K562 (cell line): ENCODE measurements at regions of chr16 and their contacts with region 1.

Region 1: GRCh38 chr16:55494994-55495421 is 13.9 kb upstream of the LPCAT2 start:
- DNase-seq: peak in 2 of 4 experiments; percentile 39 to 47
- ATAC-seq: peak; percentile 84
- H3K4me3 ChIP-seq: no peak overlapping the region
- H3K27ac ChIP-seq: no peak overlapping the region
- H3K4me1 ChIP-seq: peaks cover 0 to 6% of the 10 kb centered on the region in 2 experiments; a peak in 1 of 5 replicates
- H3K27me3 ChIP-seq: peaks cover 0 to 19% of the 10 kb centered on the region in 2 experiments; a peak in 4 of 5 replicates
- CTCF ChIP-seq: peak; percentile 48 to 72 (median 51)
- EP300 ChIP-seq: no peak
- POLR2A ChIP-seq: no peak
- RAD21 ChIP-seq: peak; percentile 88 to 91

Region 2: GRCh38 chr16:55543472-55543871 is 48.5 kb after region 1 on chr16:
- CTCF ChIA-PET with region 1: interaction called, 15 read pairs
- POLR2A ChIA-PET with region 1: no interaction called
- in situ Hi-C with region 1: no loop called
- intact Hi-C with region 1: no loop called
- DNase-seq: peak in 1 of 4 experiments; percentile 11
- ATAC-seq: no peak
- H3K4me3 ChIP-seq: no peak overlapping the region
- H3K27ac ChIP-seq: no peak overlapping the region
- H3K4me1 ChIP-seq: no peaks in the 10 kb centered on the region
- H3K27me3 ChIP-seq: no peaks in the 10 kb centered on the region
- CTCF ChIP-seq: peak in 1 of 3 experiments; percentile 53; a peak in 2 of 6 replicates
- EP300 ChIP-seq: no peak
- POLR2A ChIP-seq: no peak
- RAD21 ChIP-seq: peak; percentile 55 to 59

Region 3: DNA sequence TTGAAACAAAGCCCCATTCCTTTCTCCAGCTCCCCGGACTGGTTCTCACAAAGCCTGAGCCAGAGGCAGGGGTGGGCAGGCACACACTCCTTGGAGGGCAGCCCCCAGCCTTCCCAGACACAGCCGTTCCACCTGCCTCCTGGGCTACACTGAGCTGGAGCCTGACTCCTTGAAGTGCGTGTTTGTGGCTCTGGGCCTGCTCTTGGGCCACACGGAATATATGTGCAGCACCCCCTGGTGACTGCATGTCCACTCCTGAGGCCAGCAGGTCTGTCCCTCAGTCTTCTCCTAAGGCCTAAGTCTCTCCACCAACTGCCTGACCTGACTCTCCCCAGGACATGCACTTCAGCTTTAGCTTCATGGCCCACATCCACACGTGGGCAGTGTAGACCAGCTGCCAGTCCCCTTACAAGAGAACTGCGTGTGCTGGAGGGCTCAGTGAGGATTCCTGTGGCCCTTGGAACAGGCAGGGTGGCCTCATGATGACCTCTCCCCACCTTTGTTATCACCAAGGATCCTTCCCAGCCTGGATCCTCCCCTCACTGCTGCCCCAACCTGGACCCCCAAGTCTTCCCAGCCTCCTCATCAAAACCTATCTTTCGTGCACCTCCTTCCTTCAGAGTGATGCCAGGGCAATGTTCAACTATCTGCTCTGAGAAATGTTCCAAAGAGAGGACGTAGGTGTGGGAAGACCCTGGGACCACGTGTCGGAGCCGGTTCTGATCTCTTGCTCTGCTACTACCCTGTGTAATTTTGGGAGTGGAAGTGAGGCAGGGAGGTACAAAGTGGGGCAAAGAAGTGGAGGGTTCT is 148.4 kb after region 1 on chr16:
- CTCF ChIA-PET with region 1: interaction called, 5 read pairs
- POLR2A ChIA-PET with region 1: no interaction called
- in situ Hi-C with region 1: no loop called
- intact Hi-C with region 1: loop called (anchors 10 kb)
- DNase-seq: peak in 2 of 4 experiments; percentile 37 to 55
- ATAC-seq: peak; percentile 94
- H3K4me3 ChIP-seq: no peak overlapping the region
- H3K27ac ChIP-seq: no peak overlapping the region
- H3K4me1 ChIP-seq: no peaks in the 10 kb centered on the region
- H3K27me3 ChIP-seq: peaks cover 7 to 17% of the 10 kb centered on the region in 2 experiments; a peak in 3 of 5 replicates
- CTCF ChIP-seq: peak; percentile 51 to 56 (median 54); a peak in 5 of 6 replicates
- EP300 ChIP-seq: no peak
- POLR2A ChIP-seq: no peak
- RAD21 ChIP-seq: peak; percentile 51 to 78; a peak in 3 of 4 replicates

Region 4: DNA sequence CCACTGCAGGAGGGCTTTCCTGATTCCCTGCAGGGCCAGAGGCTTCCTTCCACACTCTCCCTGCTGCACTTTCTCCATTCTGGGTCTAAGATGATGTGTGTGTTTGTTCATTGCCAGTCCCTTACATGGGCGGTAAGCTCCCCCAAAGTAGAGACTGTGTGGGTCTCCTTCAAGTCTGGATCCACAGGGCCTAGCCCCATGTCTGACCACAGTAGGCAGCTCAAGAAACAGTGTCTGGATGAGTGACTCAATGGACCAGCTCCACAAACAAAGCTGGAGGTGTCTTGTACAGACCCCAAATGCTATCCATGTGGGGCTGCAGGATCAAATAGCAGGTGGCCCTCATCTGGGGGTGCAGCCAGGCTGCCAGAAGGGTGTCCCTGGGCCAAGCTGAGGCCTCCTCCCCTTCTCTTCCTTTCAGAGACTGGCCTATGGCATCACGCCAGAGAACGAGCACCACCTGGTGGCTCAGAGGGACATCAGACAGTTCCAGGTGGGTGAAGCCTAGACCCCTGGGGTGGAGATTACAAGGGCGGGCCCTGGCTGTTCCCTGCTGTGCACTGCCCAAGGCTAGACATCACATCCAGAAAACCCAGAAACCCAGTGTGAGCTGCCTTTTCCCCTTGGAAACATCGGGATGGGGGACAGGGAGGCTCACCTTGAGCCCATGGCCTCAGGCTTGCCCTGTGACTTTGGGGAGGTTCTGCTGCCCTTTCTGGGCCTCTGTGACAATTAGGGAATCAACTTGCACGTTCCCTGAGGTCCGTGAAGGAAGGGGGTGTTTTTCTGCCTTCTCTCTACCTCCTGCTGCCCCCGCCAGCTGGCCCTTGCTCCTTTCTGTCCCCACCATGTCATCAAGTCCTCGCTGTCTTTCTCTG is 206.7 kb after region 1 on chr16:
- CTCF ChIA-PET with region 1: interaction called, 22 read pairs
- POLR2A ChIA-PET with region 1: no interaction called
- in situ Hi-C with region 1: no loop called
- intact Hi-C with region 1: loop called (anchors 1 kb)
- DNase-seq: peak; percentile 71 to 75 (median 74)
- ATAC-seq: peak; percentile 98
- H3K4me3 ChIP-seq: no peak overlapping the region
- H3K27ac ChIP-seq: no peak overlapping the region
- H3K4me1 ChIP-seq: no peaks in the 10 kb centered on the region
- H3K27me3 ChIP-seq: peaks cover 0 to 4% of the 10 kb centered on the region in 2 experiments; a peak in 3 of 5 replicates
- CTCF ChIP-seq: peak; percentile 74 to 82 (median 78)
- EP300 ChIP-seq: no peak
- POLR2A ChIP-seq: no peak
- RAD21 ChIP-seq: peak; percentile 68 to 85

Region 5: DNA sequence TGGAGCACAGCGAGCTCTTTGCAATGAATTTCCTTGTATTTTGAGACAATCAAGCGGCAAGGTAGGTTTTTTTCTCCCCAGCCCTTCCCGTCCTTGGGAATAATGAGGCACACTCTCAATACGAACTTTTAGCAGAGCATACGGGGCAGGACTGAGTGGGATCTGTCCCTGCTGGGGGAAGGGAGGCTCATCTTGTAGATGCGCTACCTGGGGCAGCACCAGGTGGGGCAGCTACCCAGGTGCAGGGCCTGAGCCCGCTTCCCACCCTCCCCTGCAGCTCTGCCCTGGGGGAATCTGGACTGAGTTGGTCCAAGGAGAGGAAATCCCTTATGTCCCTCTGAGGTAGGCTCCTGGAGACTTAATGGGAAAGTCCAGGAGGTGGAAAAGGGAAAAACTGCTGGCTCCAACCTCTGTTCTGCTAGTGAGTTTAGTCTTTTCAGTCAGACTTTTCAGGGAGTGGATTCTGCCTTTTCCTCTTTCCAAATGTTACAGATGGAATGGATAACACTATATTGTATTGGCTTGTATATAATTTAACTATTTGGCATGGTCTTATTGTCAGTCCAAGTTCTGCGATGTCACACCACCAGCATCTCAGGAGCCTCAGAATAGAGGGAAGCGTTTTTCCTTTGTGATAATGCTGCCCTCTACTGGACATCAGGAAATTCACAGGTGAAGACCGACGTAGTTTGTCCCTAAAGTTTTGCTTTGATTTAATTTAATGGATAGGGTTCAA is 347.5 kb after region 1 on chr16:
- CTCF ChIA-PET with region 1: interaction called, 3 read pairs
- POLR2A ChIA-PET with region 1: no interaction called
- in situ Hi-C with region 1: loop called (anchors 10 kb)
- intact Hi-C with region 1: no loop called
- DNase-seq: peak; percentile 59 to 61 (median 60)
- ATAC-seq: peak; percentile 85
- H3K4me3 ChIP-seq: no peak overlapping the region
- H3K27ac ChIP-seq: no peak overlapping the region
- H3K4me1 ChIP-seq: no peaks in the 10 kb centered on the region
- H3K27me3 ChIP-seq: peaks cover 0 to 7% of the 10 kb centered on the region in 2 experiments; a peak in 2 of 5 replicates
- CTCF ChIP-seq: peak; percentile 65 to 85 (median 67)
- EP300 ChIP-seq: no peak
- POLR2A ChIP-seq: no peak
- RAD21 ChIP-seq: peak; percentile 82 to 86